ENCODE measurements at regions of chr9 and their contacts with region 1.

Region 1: DNA sequence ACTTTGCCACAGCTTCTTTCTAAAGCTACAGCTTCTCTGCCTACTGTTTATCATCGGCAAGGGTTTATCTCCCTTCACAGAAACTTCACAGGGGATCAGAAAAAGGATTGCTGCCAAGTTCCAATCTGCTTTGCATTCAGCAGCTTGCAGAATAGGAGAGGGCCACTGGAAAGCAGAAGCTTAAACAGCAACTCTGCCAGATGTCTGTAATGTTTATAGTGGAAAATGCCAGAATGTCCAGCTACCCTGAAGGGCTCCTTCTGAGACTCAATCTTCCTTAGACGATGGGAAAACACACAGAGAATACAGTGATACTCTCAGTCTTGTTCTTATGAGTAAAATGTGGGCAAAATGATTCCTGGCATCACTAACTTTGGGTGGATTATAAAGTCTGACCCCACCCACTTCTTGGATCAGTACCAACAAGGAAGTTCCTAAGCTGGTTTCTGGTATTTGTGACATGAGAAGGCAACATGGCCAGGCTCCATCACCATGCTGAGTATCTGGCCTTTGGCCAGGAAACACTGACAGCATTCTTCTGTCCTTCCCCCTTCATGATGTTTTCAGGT is 19.0 kb downstream of the STOM start:
- DNase-seq: no peak
- ATAC-seq: no peak
- H3K4me3 ChIP-seq: no peak overlapping the region
- H3K27ac ChIP-seq: no peak overlapping the region
- H3K4me1 ChIP-seq: peaks cover 15% of the 10 kb centered on the region
- H3K27me3 ChIP-seq: no peaks in the 10 kb centered on the region
- CTCF ChIP-seq: no peak
- EP300 ChIP-seq: no peak
- POLR2A ChIP-seq: no peak
- RAD21 ChIP-seq: no peak

Region 2: GRCh38 chr9:121340676-121341392 is 10.2 kb before region 1 on chr9:
- CTCF ChIA-PET with region 1: interaction called, 5 read pairs
- POLR2A ChIA-PET with region 1: interaction called, 3 read pairs
- RAD21 ChIA-PET with region 1: interaction called, 3 read pairs
- SMC1A ChIA-PET with region 1: interaction called, 14 read pairs
- in situ Hi-C with region 1: no loop called
- intact Hi-C with region 1: no loop called
- DNase-seq: no peak
- ATAC-seq: peak; percentile 93
- H3K4me3 ChIP-seq: no peak overlapping the region
- H3K27ac ChIP-seq: no peak overlapping the region
- H3K4me1 ChIP-seq: peaks cover 3% of the 10 kb centered on the region; the same call in 1 of the 2 replicates
- H3K27me3 ChIP-seq: no peaks in the 10 kb centered on the region
- CTCF ChIP-seq: no peak
- EP300 ChIP-seq: no peak
- POLR2A ChIP-seq: no peak
- RAD21 ChIP-seq: no peak

Region 3: DNA sequence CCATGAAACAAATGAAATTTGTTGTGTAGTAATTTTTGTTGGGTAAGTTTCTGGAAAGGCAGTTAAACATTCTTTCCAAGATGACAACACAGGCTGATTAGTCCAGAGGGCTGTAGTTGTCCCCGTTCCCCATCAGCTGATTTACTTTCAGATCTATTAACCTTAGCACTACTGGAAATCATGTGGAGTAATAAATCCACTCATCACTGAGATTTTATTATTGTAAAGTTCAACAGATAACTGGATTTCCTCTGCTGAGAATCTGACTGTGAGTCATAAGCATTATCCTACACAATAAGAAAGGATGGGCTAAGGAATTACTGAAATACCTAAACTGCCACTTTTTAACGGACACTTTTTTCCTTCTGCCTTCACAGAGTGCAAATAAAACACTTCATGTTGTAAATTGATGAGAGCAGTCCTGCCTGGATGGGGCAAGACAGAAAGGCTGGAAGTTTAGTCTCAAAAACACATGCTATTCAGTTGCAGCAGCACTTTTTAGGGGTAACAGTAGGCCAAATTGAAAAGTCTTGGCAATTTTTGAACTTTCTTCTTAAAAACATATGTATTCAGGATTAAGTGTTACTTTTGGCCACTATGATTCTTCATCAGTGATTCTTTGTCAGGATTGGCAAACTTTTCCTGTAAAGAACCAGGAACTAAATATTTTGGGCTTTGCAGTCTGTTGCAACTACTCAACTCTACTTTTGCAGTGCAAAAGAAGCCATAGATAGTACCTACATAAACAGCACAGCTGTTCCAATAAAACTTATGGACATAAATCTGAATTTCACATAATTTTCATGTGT is 11.9 kb after region 1 on chr9:
- CTCF ChIA-PET with region 1: interaction called, 6 read pairs
- POLR2A ChIA-PET with region 1: interaction called, 5 read pairs
- RAD21 ChIA-PET with region 1: interaction called, 3 read pairs
- SMC1A ChIA-PET with region 1: interaction called, 22 read pairs
- in situ Hi-C with region 1: no loop called
- intact Hi-C with region 1: no loop called
- DNase-seq: no peak
- ATAC-seq: no peak
- H3K4me3 ChIP-seq: no peak overlapping the region
- H3K27ac ChIP-seq: no peak overlapping the region
- H3K4me1 ChIP-seq: peaks cover 18% of the 10 kb centered on the region
- H3K27me3 ChIP-seq: no peaks in the 10 kb centered on the region
- CTCF ChIP-seq: no peak
- EP300 ChIP-seq: no peak
- POLR2A ChIP-seq: no peak
- RAD21 ChIP-seq: no peak

Region 4: DNA sequence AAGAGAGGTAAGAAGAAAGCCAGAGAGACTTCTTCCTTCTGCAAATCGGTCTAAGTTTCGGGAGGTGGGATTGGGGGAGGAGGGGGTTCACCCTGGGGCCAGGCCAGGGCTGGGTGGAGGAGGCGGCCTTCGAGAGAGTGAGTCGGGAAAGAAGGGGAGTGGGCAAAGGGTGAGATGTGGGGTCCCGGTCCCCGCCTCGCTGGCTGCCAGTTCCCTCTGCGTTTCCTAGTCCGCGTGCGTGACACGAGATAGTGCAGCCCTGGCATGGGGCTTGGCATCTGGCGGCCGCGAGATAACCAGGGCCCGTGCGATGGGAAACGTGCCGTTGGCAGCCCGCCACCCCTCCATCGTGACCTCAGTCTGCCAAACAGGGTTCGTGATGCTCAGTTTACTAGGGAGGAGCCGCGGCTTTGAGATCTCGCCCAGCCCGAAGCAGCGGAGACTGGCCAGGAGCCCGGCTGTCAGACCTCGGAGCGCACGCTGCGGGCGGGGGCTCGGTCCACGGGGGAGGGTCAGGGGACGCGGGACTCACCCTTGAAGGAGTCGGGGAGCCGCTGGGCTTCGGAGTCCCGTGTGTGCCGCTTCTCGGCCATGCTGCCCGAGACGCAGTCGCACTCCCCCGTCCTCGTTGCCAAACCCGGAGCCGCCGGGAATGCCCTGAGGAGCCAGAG is 18.7 kb after region 1 on chr9 and contains the start of gene STOM:
- CTCF ChIA-PET with region 1: interaction called, 6 read pairs
- POLR2A ChIA-PET with region 1: interaction called, 9 read pairs
- RAD21 ChIA-PET with region 1: interaction called, 6 read pairs
- SMC1A ChIA-PET with region 1: interaction called, 22 read pairs
- in situ Hi-C with region 1: no loop called
- intact Hi-C with region 1: loop called (anchors 2 kb)
- DNase-seq: no peak
- ATAC-seq: peak; percentile 84
- H3K4me3 ChIP-seq: peak within 1 kb of the TSS; percentile 84
- H3K27ac ChIP-seq: peak within 1 kb of the TSS; percentile 79
- H3K4me1 ChIP-seq: peaks cover 7% of the 10 kb centered on the region; the same call in 1 of the 2 replicates
- H3K27me3 ChIP-seq: no peaks in the 10 kb centered on the region; a peak in 1 of 4 replicates
- CTCF ChIP-seq: no peak
- EP300 ChIP-seq: no peak
- POLR2A ChIP-seq: peak; percentile 91
- RAD21 ChIP-seq: no peak
- polyA plus RNA-seq, gene STOM: 20.6 to 34.5 TPM

Region 5: GRCh38 chr9:121376214-121376830 is 25.2 kb after region 1 on chr9:
- CTCF ChIA-PET with region 1: interaction called, 11 read pairs
- POLR2A ChIA-PET with region 1: interaction called, 7 read pairs
- RAD21 ChIA-PET with region 1: interaction called, 6 read pairs
- SMC1A ChIA-PET with region 1: interaction called, 11 read pairs
- in situ Hi-C with region 1: no loop called
- intact Hi-C with region 1: loop called (anchors 2 kb)
- DNase-seq: no peak
- ATAC-seq: no peak
- H3K4me3 ChIP-seq: no peak overlapping the region
- H3K27ac ChIP-seq: no peak overlapping the region
- H3K4me1 ChIP-seq: no peaks in the 10 kb centered on the region
- H3K27me3 ChIP-seq: no peaks in the 10 kb centered on the region; a peak in 1 of 4 replicates
- CTCF ChIP-seq: peak in 1 of 3 experiments; percentile 9; a peak in 2 of 6 replicates
- EP300 ChIP-seq: no peak
- POLR2A ChIP-seq: no peak
- RAD21 ChIP-seq: peak; percentile 37; the same call in 1 of the 2 replicates

Measured in GM12878 (cell line).